ENCODE measurements at regions of chrX and their contacts with region 1.

Region 1: DNA sequence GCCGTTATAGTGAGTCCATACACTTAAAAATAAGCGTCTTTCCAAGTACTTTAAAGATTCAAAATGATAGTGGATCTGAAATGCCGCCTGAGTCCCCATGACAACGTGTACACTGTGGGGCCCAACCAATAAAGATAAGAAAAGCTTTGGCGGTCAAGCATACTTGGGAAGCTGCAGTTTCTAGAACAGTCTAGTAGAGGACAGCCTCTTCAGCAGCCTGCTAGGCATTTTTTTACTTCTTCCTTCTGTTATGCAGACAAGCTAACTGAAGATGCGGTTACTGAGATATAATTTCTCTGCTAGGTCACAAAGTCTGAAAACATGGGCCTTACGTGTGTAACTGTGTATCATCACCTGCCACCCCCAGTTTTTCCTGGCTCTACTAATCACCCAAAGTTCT is 402 bp upstream of the UPRT start:
- DNase-seq: peak in 1 of 14 experiments; percentile 3
- ATAC-seq: peak; percentile 54
- H3K4me3 ChIP-seq: peak overlapping the region; percentile 96
- H3K4me3 Mint-ChIP-seq: peak overlapping the region; percentile 92
- H3K27ac ChIP-seq: peak overlapping the region; percentile 74 to 92
- H3K27ac Mint-ChIP-seq: peak overlapping the region; percentile 88
- H3K4me1 ChIP-seq: peaks cover 7% of the 10 kb centered on the region
- H3K4me1 Mint-ChIP-seq: peaks cover 59% of the 10 kb centered on the region
- H3K27me3 ChIP-seq: no peaks in the 10 kb centered on the region
- H3K27me3 Mint-ChIP-seq: no peaks in the 10 kb centered on the region
- CTCF ChIP-seq: no peak

Region 2: GRCh38 chrX:73943693-73944562 is 1329.6 kb before region 1 on chrX:
- CTCF ChIA-PET with region 1: no interaction called
- POLR2A ChIA-PET with region 1: no interaction called
- intact Hi-C with region 1: loop called in 1 of 2 experiments (anchors 10 kb)
- DNase-seq: peak; percentile 70 to 91 (median 84)
- ATAC-seq: peak; percentile 99
- H3K4me3 ChIP-seq: peak overlapping the region; percentile 81
- H3K4me3 Mint-ChIP-seq: peak overlapping the region; percentile 88
- H3K27ac ChIP-seq: peak overlapping the region; percentile 64 to 78
- H3K27ac Mint-ChIP-seq: peak overlapping the region; percentile 96
- H3K4me1 ChIP-seq: peaks cover 10% of the 10 kb centered on the region
- H3K4me1 Mint-ChIP-seq: peaks cover 29% of the 10 kb centered on the region
- H3K27me3 ChIP-seq: no peaks in the 10 kb centered on the region
- H3K27me3 Mint-ChIP-seq: no peaks in the 10 kb centered on the region
- CTCF ChIP-seq: no peak

Region 3: GRCh38 chrX:74160358-74160757 is 1113.1 kb before region 1 on chrX:
- CTCF ChIA-PET with region 1: no interaction called
- POLR2A ChIA-PET with region 1: no interaction called
- intact Hi-C with region 1: no loop called
- DNase-seq: no peak
- ATAC-seq: no peak
- H3K4me3 ChIP-seq: no peak overlapping the region
- H3K4me3 Mint-ChIP-seq: no peak overlapping the region
- H3K27ac ChIP-seq: no peak overlapping the region
- H3K27ac Mint-ChIP-seq: no peak overlapping the region
- H3K4me1 ChIP-seq: no peaks in the 10 kb centered on the region
- H3K4me1 Mint-ChIP-seq: no peaks in the 10 kb centered on the region
- H3K27me3 ChIP-seq: no peaks in the 10 kb centered on the region
- H3K27me3 Mint-ChIP-seq: no peaks in the 10 kb centered on the region
- CTCF ChIP-seq: no peak

Region 4: DNA sequence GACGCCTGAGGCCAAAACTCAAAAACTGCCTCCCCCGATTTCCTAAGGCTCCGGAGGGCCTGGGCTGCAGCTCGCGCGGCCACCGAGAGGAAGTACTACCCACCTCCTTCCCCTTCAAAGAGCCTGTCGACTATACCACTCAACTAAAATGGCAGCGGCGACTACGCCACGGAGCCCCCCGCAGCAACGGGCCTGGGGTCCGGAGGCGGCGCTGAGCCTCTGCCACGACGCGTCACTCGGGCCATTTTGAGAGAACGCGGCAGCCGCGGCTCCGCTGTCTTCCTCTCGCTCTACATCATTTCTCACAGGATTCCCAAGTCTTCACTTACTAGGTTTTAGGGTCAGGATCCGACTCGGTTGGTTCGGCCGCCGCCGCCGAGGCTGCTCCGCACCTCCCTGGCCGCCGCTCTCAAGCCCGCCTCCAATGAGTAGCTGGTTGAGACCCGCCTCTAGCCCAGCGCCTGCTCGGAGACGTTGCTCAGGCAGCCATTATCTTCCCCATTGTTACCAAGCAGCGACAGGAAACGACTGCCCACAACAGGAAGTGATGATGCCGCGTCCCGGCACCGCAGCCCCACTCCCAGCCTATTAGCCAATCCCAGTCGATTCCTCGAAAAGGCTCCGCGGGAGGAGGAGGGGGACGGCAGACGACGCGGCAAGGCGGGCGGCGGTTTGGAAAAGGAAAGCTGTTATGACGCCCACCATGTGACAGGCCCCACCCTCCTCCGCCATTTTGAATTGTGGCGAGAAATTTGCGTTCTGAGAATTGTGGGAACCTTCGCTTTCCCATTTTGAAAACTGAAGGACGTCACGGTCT is 659.2 kb before region 1 on chrX and contains the start of gene RLIM:
- CTCF ChIA-PET with region 1: no interaction called
- POLR2A ChIA-PET with region 1: interaction called, 12 read pairs
- intact Hi-C with region 1: loop called in 1 of 2 experiments (anchors 5 kb)
- DNase-seq: peak; percentile 83 to 97 (median 88)
- ATAC-seq: peak; percentile 88
- H3K4me3 ChIP-seq: peak within 1 kb of the TSS; percentile 90
- H3K4me3 Mint-ChIP-seq: peak within 1 kb of the TSS; percentile 99
- H3K27ac ChIP-seq: peak within 1 kb of the TSS; percentile 95 to 100
- H3K27ac Mint-ChIP-seq: peak within 1 kb of the TSS; percentile 95
- H3K4me1 ChIP-seq: peaks cover 6% of the 10 kb centered on the region
- H3K4me1 Mint-ChIP-seq: peaks cover 25% of the 10 kb centered on the region
- H3K27me3 ChIP-seq: no peaks in the 10 kb centered on the region
- H3K27me3 Mint-ChIP-seq: no peaks in the 10 kb centered on the region
- CTCF ChIP-seq: no peak
- total RNA-seq, gene RLIM: 71.0 to 73.6 TPM

Region 5: DNA sequence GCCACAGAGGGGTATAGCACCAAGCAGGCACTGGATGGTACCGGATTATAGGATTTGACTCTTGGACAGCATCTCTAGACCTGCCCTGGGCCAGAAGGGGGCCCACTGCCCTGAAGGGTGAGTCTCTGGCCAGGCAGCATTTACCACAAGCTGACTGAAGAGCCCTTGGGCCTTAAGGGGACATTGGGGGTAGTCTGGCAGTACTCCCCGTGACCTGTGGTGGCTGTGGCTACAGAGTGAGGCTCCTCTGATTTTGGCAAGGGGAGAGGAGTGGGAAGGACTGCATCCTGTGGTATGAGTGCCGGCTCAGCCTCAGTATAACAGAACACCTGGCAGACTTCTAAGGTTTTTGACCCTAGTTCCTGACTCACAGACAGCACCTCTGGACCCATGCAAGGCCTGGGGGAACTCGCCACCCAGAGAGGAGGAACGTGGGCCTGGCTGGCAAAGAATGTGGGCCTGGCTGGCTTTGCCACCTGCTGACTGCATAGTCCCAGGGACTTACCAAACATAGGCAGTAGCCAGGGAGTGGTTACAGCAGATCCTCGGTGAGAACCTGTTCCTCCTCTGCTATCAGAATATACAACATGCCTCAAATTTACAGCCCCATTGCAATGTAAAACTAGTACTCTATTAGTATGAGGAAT is 165.5 kb before region 1 on chrX:
- CTCF ChIA-PET with region 1: no interaction called
- POLR2A ChIA-PET with region 1: no interaction called
- intact Hi-C with region 1: no loop called
- DNase-seq: no peak
- ATAC-seq: no peak
- H3K4me3 ChIP-seq: no peak overlapping the region
- H3K4me3 Mint-ChIP-seq: no peak overlapping the region
- H3K27ac ChIP-seq: no peak overlapping the region
- H3K27ac Mint-ChIP-seq: no peak overlapping the region
- H3K4me1 ChIP-seq: no peaks in the 10 kb centered on the region
- H3K4me1 Mint-ChIP-seq: peaks cover 21% of the 10 kb centered on the region
- H3K27me3 ChIP-seq: no peaks in the 10 kb centered on the region
- H3K27me3 Mint-ChIP-seq: no peaks in the 10 kb centered on the region
- CTCF ChIP-seq: no peak

Region 6: GRCh38 chrX:75156021-75156945 is 117.2 kb before region 1 on chrX and contains the start of gene ABCB7:
- CTCF ChIA-PET with region 1: no interaction called
- POLR2A ChIA-PET with region 1: interaction called, 7 read pairs
- intact Hi-C with region 1: loop called (anchors 5 kb)
- DNase-seq: peak; percentile 38 to 85 (median 57)
- ATAC-seq: peak; percentile 94
- H3K4me3 ChIP-seq: peak within 1 kb of the TSS; percentile 77
- H3K4me3 Mint-ChIP-seq: peak within 1 kb of the TSS; percentile 95
- H3K27ac ChIP-seq: peak within 1 kb of the TSS; percentile 52 to 76
- H3K27ac Mint-ChIP-seq: peak within 1 kb of the TSS; percentile 93
- H3K4me1 ChIP-seq: peaks cover 3% of the 10 kb centered on the region
- H3K4me1 Mint-ChIP-seq: peaks cover 63% of the 10 kb centered on the region
- H3K27me3 ChIP-seq: no peaks in the 10 kb centered on the region
- H3K27me3 Mint-ChIP-seq: no peaks in the 10 kb centered on the region
- CTCF ChIP-seq: no peak
- total RNA-seq, gene ABCB7: 13.4 to 14.5 TPM

Region 7: DNA sequence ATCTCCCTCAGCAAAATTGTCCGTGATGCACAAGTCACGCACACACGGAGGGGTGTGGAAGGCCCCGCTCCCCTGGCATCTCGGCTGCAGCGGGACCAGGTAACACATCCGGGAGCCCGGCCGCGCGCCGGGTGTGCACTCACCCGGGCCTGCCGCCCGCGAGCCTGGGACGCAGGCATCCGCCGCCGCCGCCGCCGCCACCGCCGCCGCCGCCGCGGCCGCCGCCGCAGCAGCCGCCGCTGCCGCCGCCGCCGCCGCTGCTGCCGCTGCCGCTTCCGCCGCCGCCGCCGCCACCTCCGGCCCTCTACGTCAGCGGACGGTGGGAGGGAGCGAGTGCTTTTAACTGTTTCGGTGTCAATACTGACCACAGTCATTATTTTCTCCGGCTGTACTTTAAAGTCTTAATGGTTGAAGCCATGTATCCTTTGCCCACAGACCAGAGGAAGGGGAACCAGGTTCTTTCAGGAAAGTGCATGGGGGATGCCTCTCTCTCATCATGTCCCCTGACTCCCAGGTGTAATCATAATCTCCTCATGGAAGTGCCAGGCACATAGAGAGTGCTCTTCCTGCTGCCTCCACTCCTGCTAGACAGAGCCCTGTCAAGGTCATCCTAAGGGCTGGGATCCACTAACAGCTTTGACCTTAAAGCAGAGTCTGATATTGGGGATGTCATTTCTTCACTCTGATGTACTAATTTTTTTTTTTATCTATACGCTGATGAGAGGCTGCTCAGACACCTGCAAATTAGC is 473.6 kb after region 1 on chrX:
- CTCF ChIA-PET with region 1: no interaction called
- POLR2A ChIA-PET with region 1: no interaction called
- intact Hi-C with region 1: loop called in 1 of 2 experiments (anchors 10 kb)
- DNase-seq: peak in 12 of 14 experiments; percentile 0 to 50 (median 17)
- ATAC-seq: peak; percentile 81
- H3K4me3 ChIP-seq: peak overlapping the region; percentile 46
- H3K4me3 Mint-ChIP-seq: peak overlapping the region; percentile 88
- H3K27ac ChIP-seq: no peak overlapping the region
- H3K27ac Mint-ChIP-seq: peak overlapping the region; percentile 47
- H3K4me1 ChIP-seq: peaks cover 5% of the 10 kb centered on the region
- H3K4me1 Mint-ChIP-seq: peaks cover 11% of the 10 kb centered on the region
- H3K27me3 ChIP-seq: no peaks in the 10 kb centered on the region
- H3K27me3 Mint-ChIP-seq: no peaks in the 10 kb centered on the region
- CTCF ChIP-seq: no peak

Region 8: GRCh38 chrX:76172325-76172893 is 898.9 kb after region 1 on chrX:
- CTCF ChIA-PET with region 1: no interaction called
- POLR2A ChIA-PET with region 1: no interaction called
- intact Hi-C with region 1: loop called in 1 of 2 experiments (anchors 10 kb)
- DNase-seq: no peak
- ATAC-seq: peak; percentile 49
- H3K4me3 ChIP-seq: peak overlapping the region; percentile 71
- H3K4me3 Mint-ChIP-seq: peak overlapping the region; percentile 97
- H3K27ac ChIP-seq: peak overlapping the region; percentile 72 to 82
- H3K27ac Mint-ChIP-seq: peak overlapping the region; percentile 98
- H3K4me1 ChIP-seq: peaks cover 19% of the 10 kb centered on the region
- H3K4me1 Mint-ChIP-seq: peaks cover 53% of the 10 kb centered on the region
- H3K27me3 ChIP-seq: no peaks in the 10 kb centered on the region
- H3K27me3 Mint-ChIP-seq: no peaks in the 10 kb centered on the region
- CTCF ChIP-seq: no peak

Region 9: DNA sequence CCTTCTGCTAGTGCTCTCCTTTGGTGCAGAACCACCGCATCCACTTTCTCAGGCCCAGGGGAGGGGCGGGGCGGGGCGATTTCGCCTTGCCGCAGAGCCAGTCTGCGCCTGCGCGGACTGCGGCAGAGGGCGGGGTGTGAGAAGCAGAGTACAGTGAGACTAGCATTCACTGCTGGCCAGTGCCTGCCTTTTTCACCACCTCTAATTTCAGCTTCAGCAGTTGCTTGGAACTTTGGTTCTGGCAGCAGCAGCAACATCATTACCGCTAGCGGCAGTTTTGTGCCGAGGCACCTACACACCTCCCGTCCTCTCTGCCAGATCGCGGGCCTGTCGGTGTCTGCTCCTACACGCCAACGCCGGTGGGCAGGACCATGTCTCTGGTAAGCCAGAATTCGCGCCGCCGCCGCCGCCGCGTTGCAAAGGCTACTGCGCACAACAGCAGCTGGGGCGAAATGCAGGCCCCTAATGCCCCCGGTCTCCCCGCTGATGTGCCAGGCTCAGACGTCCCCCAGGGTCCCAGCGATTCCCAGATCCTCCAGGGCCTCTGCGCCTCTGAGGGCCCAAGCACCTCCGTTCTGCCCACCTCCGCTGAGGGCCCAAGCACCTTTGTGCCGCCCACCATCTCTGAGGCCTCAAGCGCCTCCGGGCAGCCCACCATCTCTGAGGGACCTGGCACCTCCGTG is 1154.2 kb after region 1 on chrX and contains the start of gene MAGEE1:
- CTCF ChIA-PET with region 1: no interaction called
- POLR2A ChIA-PET with region 1: no interaction called
- intact Hi-C with region 1: loop called in 1 of 2 experiments (anchors 5 kb)
- DNase-seq: peak; percentile 70 to 90 (median 79)
- ATAC-seq: peak; percentile 79
- H3K4me3 ChIP-seq: peak within 1 kb of the TSS; percentile 90
- H3K4me3 Mint-ChIP-seq: peak within 1 kb of the TSS; percentile 97
- H3K27ac ChIP-seq: peak within 1 kb of the TSS; percentile 53 to 60
- H3K27ac Mint-ChIP-seq: peak within 1 kb of the TSS; percentile 94
- H3K4me1 ChIP-seq: peaks cover 30% of the 10 kb centered on the region
- H3K4me1 Mint-ChIP-seq: peaks cover 42% of the 10 kb centered on the region
- H3K27me3 ChIP-seq: no peaks in the 10 kb centered on the region
- H3K27me3 Mint-ChIP-seq: no peaks in the 10 kb centered on the region
- CTCF ChIP-seq: no peak
- total RNA-seq, gene MAGEE1: 12.4 to 12.7 TPM